B cell (primary cell): ENCODE measurements at regions of chr2 and their contacts with region 1.

Region 1: DNA sequence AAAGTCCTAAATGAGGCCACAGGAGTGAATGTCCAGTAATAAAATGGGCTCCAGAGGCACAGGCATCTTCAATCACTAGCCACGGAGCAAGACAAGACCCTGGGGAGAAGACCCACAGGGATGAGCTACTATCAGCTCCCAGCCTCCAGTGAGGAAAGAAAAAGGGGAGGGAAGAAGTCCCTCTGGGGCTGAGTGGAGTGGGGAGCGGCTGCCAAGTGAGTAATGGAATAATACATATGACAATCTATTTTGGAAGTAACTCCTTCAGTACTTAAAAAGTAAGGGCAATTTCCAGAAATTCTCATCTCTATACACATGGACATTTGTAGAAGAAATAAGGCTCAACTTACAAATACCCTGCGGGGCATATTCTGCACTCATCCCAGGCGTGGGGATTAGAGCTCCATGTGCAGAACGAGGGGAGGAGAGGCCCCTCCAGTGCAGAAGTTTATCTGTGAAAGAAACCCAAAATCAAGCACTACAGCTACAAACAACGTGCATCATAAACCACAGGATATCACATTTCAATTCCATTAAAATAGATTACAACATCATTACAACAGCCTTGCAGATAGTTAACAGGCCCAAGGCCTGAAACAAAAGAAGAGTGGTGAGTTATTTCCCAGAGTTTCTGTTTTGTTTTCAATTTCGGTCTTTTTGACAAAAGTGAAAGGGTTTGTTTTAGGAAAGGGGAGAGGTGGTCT is 84.9 kb downstream of the BCL11A start:
- DNase-seq: no peak
- ATAC-seq: no peak
- H3K4me3 ChIP-seq: no peak overlapping the region
- H3K4me3 Mint-ChIP-seq: peak overlapping the region; percentile 53
- H3K27ac ChIP-seq: peak overlapping the region; percentile 24 to 93
- H3K27ac Mint-ChIP-seq: peak overlapping the region; percentile 91
- H3K4me1 ChIP-seq: peaks cover 70 to 73% of the 10 kb centered on the region in 2 donors
- H3K4me1 Mint-ChIP-seq: peaks cover 83% of the 10 kb centered on the region
- H3K27me3 ChIP-seq: no peaks in the 10 kb centered on the region
- H3K27me3 Mint-ChIP-seq: no peaks in the 10 kb centered on the region
- CTCF ChIP-seq: no peak

Region 2: GRCh38 chr2:60453872-60454271 is 14.7 kb before region 1 on chr2:
- CTCF ChIA-PET with region 1: interaction called, 4 read pairs
- POLR2A ChIA-PET with region 1: interaction called, 5 read pairs
- intact Hi-C with region 1: loop called (anchors 2 kb)
- DNase-seq: no peak
- ATAC-seq: no peak
- H3K4me3 ChIP-seq: no peak overlapping the region
- H3K4me3 Mint-ChIP-seq: no peak overlapping the region
- H3K27ac ChIP-seq: peak overlapping the region in 1 of 2 donors; percentile 80
- H3K27ac Mint-ChIP-seq: peak overlapping the region; percentile 81
- H3K4me1 ChIP-seq: peaks cover 18 to 32% of the 10 kb centered on the region in 2 donors
- H3K4me1 Mint-ChIP-seq: peaks cover 54% of the 10 kb centered on the region
- H3K27me3 ChIP-seq: no peaks in the 10 kb centered on the region
- H3K27me3 Mint-ChIP-seq: no peaks in the 10 kb centered on the region
- CTCF ChIP-seq: no peak

Region 3: DNA sequence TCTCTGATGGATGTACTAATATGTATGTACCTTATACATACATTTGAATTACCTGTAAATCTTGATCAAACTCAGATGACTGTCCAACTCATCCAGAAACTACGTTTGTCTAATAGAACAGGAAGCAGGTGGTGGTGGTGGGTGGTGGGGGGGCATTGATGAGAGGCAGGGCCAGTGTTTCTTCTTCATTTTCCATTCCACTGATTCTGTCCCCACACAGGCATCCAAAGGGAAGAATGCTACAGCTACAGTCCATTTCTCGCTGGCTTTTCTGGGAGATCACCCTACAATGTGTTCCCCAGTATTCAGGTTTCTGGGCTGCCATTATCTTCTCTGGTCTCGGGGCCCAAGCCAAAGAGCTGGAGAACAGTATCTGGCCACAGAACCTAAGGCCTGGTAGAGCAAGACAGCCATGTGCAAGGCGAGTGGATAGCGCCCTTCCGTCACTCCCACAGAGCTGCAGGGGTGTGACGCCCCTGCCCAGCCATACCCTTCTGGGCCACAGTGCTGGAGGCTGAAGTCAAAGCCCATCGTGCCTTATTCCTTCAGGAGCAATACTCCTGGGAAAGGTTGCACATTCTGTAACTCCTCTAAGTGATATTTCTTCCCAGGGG is 30.4 kb after region 1 on chr2:
- CTCF ChIA-PET with region 1: interaction called, 4 read pairs
- POLR2A ChIA-PET with region 1: interaction called, 12 read pairs
- intact Hi-C with region 1: no loop called
- DNase-seq: peak; percentile 77
- ATAC-seq: peak; percentile 68
- H3K4me3 ChIP-seq: peak overlapping the region in 1 of 5 experiments; percentile 22
- H3K4me3 Mint-ChIP-seq: peak overlapping the region; percentile 74
- H3K27ac ChIP-seq: peak overlapping the region; percentile 80 to 93
- H3K27ac Mint-ChIP-seq: peak overlapping the region; percentile 88
- H3K4me1 ChIP-seq: peaks cover 99% of the 10 kb centered on the region in 2 donors
- H3K4me1 Mint-ChIP-seq: peaks cover 96% of the 10 kb centered on the region
- H3K27me3 ChIP-seq: no peaks in the 10 kb centered on the region
- H3K27me3 Mint-ChIP-seq: no peaks in the 10 kb centered on the region
- CTCF ChIP-seq: no peak